ENCODE measurements at regions of chr17 and their contacts with region 1.

Region 1: GRCh38 chr17:19362277-19363113 is at the start of gene B9D1:
- DNase-seq: peak; percentile 90 to 97 (median 92)
- ATAC-seq: peak; percentile 96
- H3K4me3 ChIP-seq: peak within 1 kb of the TSS; percentile 94
- H3K4me3 Mint-ChIP-seq: peak within 1 kb of the TSS; percentile 75 to 96 (median 92)
- H3K27ac ChIP-seq: peak within 1 kb of the TSS; percentile 66
- H3K27ac Mint-ChIP-seq: peak within 1 kb of the TSS; percentile 63 to 93 (median 91)
- H3K4me1 ChIP-seq: peaks cover 6 to 11% of the 10 kb centered on the region in 2 donors
- H3K4me1 Mint-ChIP-seq: peaks cover 0 to 21% (median 6%) of the 10 kb centered on the region in 7 donors
- H3K27me3 ChIP-seq: no peaks in the 10 kb centered on the region
- H3K27me3 Mint-ChIP-seq: peaks cover 7 to 25% (median 19%) of the 10 kb centered on the region in 5 donors
- total RNA-seq, gene B9D1: 0.58 to 5.0 (median 2.4) TPM

Region 2: GRCh38 chr17:19447085-19447583 is 84.6 kb after region 1 on chr17:
- CTCF ChIA-PET with region 1: interaction called, 64 read pairs
- POLR2A ChIA-PET with region 1: interaction called, 3 read pairs
- intact Hi-C with region 1: loop called (anchors 1 kb)
- DNase-seq: peak; percentile 29 to 83 (median 66)
- ATAC-seq: peak; percentile 81
- H3K4me3 ChIP-seq: no peak overlapping the region
- H3K4me3 Mint-ChIP-seq: no peak overlapping the region
- H3K27ac ChIP-seq: no peak overlapping the region
- H3K27ac Mint-ChIP-seq: peak overlapping the region in 2 of 9 donors; percentile 10 to 35
- H3K4me1 ChIP-seq: no peaks in the 10 kb centered on the region
- H3K4me1 Mint-ChIP-seq: peaks cover 0 to 6% (median 4%) of the 10 kb centered on the region in 7 donors
- H3K27me3 ChIP-seq: no peaks in the 10 kb centered on the region
- H3K27me3 Mint-ChIP-seq: peaks cover 9 to 25% (median 14%) of the 10 kb centered on the region in 5 donors

Region 3: DNA sequence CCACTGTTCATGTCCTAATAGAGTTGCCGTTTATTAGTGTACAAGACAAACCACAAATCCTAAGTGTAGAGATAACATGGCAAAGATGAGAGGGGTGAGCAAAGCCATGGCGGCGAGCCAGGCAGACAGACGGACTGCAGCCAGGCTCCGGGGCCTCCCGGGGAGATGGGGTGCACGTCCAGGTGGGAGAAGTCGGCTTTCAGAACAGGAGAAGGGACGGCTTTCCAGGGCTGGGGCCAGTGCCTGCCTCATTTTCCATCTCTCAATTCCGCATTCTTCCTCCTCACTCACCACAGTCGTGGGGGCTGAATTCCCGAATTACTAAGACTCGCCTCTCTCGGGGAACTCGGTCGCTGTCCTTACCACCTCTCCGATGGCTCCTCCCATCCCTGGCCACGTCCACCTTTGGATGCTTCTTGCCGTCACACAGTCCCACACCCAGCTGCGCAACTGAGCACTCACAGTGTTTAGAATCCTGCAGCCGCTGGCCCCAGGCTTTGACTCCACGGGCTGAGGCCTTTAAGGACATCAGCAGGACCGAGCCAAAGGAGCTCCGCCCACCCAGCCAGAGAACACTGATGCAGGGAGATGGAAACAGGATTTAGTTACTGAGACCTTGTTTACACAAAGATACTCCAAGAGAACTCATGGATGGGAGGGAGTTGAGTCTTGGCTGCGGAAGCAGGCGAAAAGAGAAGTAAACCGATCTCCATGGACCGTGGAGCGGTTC is 108.2 kb after region 1 on chr17:
- CTCF ChIA-PET with region 1: interaction called, 5 read pairs
- POLR2A ChIA-PET with region 1: no interaction called
- intact Hi-C with region 1: loop called (anchors 1 to 2 kb)
- DNase-seq: no peak
- ATAC-seq: no peak
- H3K4me3 ChIP-seq: no peak overlapping the region
- H3K4me3 Mint-ChIP-seq: no peak overlapping the region
- H3K27ac ChIP-seq: no peak overlapping the region
- H3K27ac Mint-ChIP-seq: no peak overlapping the region
- H3K4me1 ChIP-seq: peaks cover 0 to 2% of the 10 kb centered on the region in 2 donors
- H3K4me1 Mint-ChIP-seq: peaks cover 0 to 5% (median 0%) of the 10 kb centered on the region in 7 donors
- H3K27me3 ChIP-seq: no peaks in the 10 kb centered on the region
- H3K27me3 Mint-ChIP-seq: no peaks in the 10 kb centered on the region

Region 4: GRCh38 chr17:19513897-19514488 is 151.5 kb after region 1 on chr17:
- CTCF ChIA-PET with region 1: interaction called, 3 read pairs
- POLR2A ChIA-PET with region 1: no interaction called
- intact Hi-C with region 1: loop called in 1 of 2 experiments (anchors 2 kb)
- DNase-seq: peak; percentile 46 to 71 (median 66)
- ATAC-seq: peak; percentile 82
- H3K4me3 ChIP-seq: no peak overlapping the region
- H3K4me3 Mint-ChIP-seq: no peak overlapping the region
- H3K27ac ChIP-seq: no peak overlapping the region
- H3K27ac Mint-ChIP-seq: peak overlapping the region in 3 of 9 donors; percentile 3 to 56 (median 36)
- H3K4me1 ChIP-seq: peaks cover 0 to 4% of the 10 kb centered on the region in 2 donors
- H3K4me1 Mint-ChIP-seq: peaks cover 0 to 5% (median under 1%) of the 10 kb centered on the region in 7 donors
- H3K27me3 ChIP-seq: no peaks in the 10 kb centered on the region
- H3K27me3 Mint-ChIP-seq: peaks cover 0 to 11% (median 0%) of the 10 kb centered on the region in 5 donors

Region 5: GRCh38 chr17:19766422-19767270 is 404.2 kb after region 1 on chr17:
- CTCF ChIA-PET with region 1: interaction called, 10 read pairs
- POLR2A ChIA-PET with region 1: no interaction called
- intact Hi-C with region 1: loop called (anchors 1 kb)
- DNase-seq: peak; percentile 54 to 88 (median 77)
- ATAC-seq: peak; percentile 93
- H3K4me3 ChIP-seq: no peak overlapping the region
- H3K4me3 Mint-ChIP-seq: peak overlapping the region in 8 of 10 donors; percentile 25 to 73 (median 59)
- H3K27ac ChIP-seq: peak overlapping the region; percentile 33
- H3K27ac Mint-ChIP-seq: peak overlapping the region; percentile 50 to 99 (median 87)
- H3K4me1 ChIP-seq: peaks cover 5 to 43% of the 10 kb centered on the region in 2 donors
- H3K4me1 Mint-ChIP-seq: peaks cover 22 to 63% (median 46%) of the 10 kb centered on the region in 7 donors
- H3K27me3 ChIP-seq: no peaks in the 10 kb centered on the region
- H3K27me3 Mint-ChIP-seq: peaks cover 0 to 3% (median 0%) of the 10 kb centered on the region in 5 donors

Region 6: DNA sequence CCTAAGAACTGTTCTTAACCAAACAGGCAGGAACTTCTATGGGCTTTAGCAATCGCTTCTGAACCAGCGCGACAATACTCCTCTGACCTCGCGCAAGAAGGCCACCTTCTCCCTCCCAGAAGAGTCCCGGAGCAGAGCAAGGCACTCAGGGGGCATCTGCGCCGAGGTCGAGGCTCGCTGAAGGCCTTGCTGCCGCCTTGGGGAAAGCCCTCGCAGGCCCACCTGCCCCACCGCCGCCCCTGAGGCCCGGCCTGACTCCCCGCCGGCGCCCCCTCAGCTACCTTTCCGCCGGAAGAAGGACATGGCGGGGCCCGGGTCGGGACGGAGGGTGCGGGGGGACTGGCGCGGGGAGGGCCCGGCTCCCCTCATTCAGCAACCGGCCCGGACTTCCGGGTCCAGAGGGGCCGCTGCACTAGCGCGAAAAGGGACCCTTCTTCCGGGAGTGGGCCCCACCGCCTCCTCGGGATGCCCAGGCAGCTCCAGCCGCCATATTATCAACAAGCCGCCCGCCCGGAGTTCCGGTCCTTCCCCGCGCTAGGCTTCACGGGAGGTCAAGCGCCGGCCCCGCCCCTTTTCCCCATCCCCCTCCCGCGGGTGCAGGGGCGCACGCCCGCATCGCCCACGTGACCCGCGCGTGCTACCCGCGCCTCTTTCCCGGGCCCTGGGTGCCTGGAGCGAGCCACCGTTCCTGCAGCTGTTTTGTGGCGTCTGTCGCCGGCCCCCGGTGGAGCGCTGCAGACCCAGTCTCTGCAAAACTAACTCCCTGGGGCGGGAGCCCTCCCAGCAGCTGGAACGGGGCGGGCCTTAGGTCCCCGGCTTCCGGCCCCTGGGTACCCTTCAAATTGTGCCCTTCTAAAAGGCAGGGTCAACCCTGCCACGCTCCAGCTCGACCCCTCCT is 615.1 kb after region 1 on chr17 and contains the start of gene AKAP10:
- CTCF ChIA-PET with region 1: no interaction called
- POLR2A ChIA-PET with region 1: no interaction called
- intact Hi-C with region 1: loop called in 1 of 2 experiments (anchors 1 kb)
- DNase-seq: peak; percentile 78 to 96 (median 86)
- ATAC-seq: peak; percentile 94
- H3K4me3 ChIP-seq: peak within 1 kb of the TSS; percentile 85
- H3K4me3 Mint-ChIP-seq: peak within 1 kb of the TSS; percentile 88 to 98 (median 96)
- H3K27ac ChIP-seq: peak within 1 kb of the TSS; percentile 78
- H3K27ac Mint-ChIP-seq: peak within 1 kb of the TSS; percentile 94 to 98 (median 96)
- H3K4me1 ChIP-seq: peaks cover 8 to 11% of the 10 kb centered on the region in 2 donors
- H3K4me1 Mint-ChIP-seq: peaks cover 28 to 55% (median 52%) of the 10 kb centered on the region in 7 donors
- H3K27me3 ChIP-seq: no peaks in the 10 kb centered on the region
- H3K27me3 Mint-ChIP-seq: no peaks in the 10 kb centered on the region
- total RNA-seq, gene AKAP10: 40.5 to 69.0 (median 51.0) TPM

Measured in naive thymus-derived CD4-positive, alpha-beta T cell (primary cell).